MCF 10A (cell line): ENCODE measurements at regions of chr1 and their contacts with region 1.

Region 1: GRCh38 chr1:34709547-34709946 is 45.3 kb upstream of the GJB5 start:
- DNase-seq: peak; percentile 5
- H3K4me3 Mint-ChIP-seq: no peak overlapping the region
- H3K27ac Mint-ChIP-seq: no peak overlapping the region
- H3K4me1 Mint-ChIP-seq: no peaks in the 10 kb centered on the region
- H3K27me3 Mint-ChIP-seq: peaks cover 47% of the 10 kb centered on the region
- CTCF ChIP-seq: no peak

Region 2: DNA sequence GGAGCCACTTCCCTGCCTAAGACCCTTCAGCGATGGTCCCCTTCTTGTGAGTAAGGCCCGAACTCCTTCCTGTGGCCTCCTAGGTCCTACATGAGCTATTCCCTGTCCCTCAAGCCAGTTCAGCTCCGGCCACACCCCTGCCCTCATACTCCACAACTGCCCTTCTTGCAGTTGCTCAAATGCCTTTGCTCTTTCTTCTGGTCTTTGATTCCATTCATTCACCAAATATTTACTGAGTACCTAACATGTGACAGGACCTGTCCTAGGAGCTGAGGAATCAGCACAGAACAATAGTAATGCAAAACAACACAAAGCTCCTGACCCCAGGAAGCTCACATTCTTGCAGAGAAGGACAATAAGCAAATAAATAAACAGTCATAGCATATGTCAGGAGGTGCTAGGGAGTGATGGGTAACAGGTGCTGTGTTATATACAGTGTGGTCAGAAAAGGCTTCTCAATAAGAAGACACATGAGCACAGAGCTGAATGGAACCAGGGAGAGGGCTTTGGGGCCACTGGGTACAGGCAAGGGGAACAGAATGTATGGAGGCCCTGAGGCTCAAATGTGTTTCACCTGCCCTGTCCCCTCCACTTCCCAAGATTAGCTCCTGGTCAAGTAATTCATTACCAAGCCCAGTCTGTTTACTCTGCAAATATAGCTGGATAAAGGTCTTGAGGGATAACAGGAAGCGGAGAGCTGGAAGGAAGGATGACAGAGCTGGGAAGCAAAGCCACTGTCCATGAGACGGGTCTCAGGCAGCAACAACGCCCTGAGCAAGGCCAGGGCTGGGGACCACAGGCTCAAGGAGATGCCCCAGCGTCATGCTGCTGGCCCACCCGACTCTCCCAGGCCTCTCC is 689.6 kb before region 1 on chr1:
- CTCF ChIA-PET with region 1: no interaction called
- POLR2A ChIA-PET with region 1: no interaction called
- intact Hi-C with region 1: no loop called
- DNase-seq: no peak
- H3K4me3 Mint-ChIP-seq: no peak overlapping the region
- H3K27ac Mint-ChIP-seq: no peak overlapping the region
- H3K4me1 Mint-ChIP-seq: no peaks in the 10 kb centered on the region
- H3K27me3 Mint-ChIP-seq: no peaks in the 10 kb centered on the region
- CTCF ChIP-seq: no peak

Region 3: GRCh38 chr1:34371829-34372532 is 337.6 kb before region 1 on chr1:
- CTCF ChIA-PET with region 1: no interaction called
- POLR2A ChIA-PET with region 1: no interaction called
- intact Hi-C with region 1: no loop called
- DNase-seq: no peak
- H3K4me3 Mint-ChIP-seq: no peak overlapping the region
- H3K27ac Mint-ChIP-seq: no peak overlapping the region
- H3K4me1 Mint-ChIP-seq: no peaks in the 10 kb centered on the region
- H3K27me3 Mint-ChIP-seq: no peaks in the 10 kb centered on the region
- CTCF ChIP-seq: no peak

Region 4: GRCh38 chr1:34681480-34682451 is 27.8 kb before region 1 on chr1:
- CTCF ChIA-PET with region 1: interaction called, 4 read pairs
- POLR2A ChIA-PET with region 1: no interaction called
- intact Hi-C with region 1: loop called (anchors 2 kb)
- DNase-seq: peak; percentile 73
- H3K4me3 Mint-ChIP-seq: no peak overlapping the region
- H3K27ac Mint-ChIP-seq: no peak overlapping the region
- H3K4me1 Mint-ChIP-seq: no peaks in the 10 kb centered on the region
- H3K27me3 Mint-ChIP-seq: peaks cover 43% of the 10 kb centered on the region
- CTCF ChIP-seq: peak; percentile 69

Region 5: DNA sequence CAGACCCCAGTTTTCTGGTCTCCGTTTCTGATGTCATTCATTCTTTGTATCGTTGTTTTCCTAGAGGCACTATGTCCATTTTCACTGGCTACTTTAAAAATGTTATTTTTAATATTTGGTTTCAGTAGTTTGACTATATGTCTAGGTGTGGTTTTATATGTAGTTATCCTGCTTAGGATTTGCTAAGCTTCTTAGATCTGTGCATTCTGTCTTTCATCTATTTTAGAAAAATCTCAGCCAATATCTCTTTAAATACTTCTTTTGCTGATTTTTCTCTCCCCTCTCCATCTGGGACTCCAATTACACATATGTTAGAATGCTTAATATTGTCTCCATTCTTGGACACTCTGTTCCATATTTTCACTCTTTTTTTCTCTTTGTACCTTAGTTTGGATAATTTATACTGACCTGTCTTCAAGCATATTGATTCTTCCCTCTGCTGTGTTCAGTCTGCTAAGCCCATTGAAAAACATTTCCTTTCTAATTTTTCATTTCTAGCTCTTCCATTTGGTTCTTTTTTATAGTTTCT is 1073.6 kb after region 1 on chr1:
- CTCF ChIA-PET with region 1: no interaction called
- POLR2A ChIA-PET with region 1: no interaction called
- intact Hi-C with region 1: no loop called
- DNase-seq: no peak
- H3K4me3 Mint-ChIP-seq: no peak overlapping the region
- H3K27ac Mint-ChIP-seq: no peak overlapping the region
- H3K4me1 Mint-ChIP-seq: no peaks in the 10 kb centered on the region
- H3K27me3 Mint-ChIP-seq: no peaks in the 10 kb centered on the region
- CTCF ChIP-seq: no peak